ENCODE measurements at regions of chr18 and their contacts with region 1.

Region 1: GRCh38 chr18:70454704-70455322 is 166.0 kb downstream of the SOCS6 start:
- DNase-seq: peak; percentile 77
- H3K4me3 ChIP-seq: no peak overlapping the region
- H3K27ac ChIP-seq: no peak overlapping the region
- H3K4me1 ChIP-seq: no peaks in the 10 kb centered on the region
- H3K27me3 ChIP-seq: no peaks in the 10 kb centered on the region
- CTCF ChIP-seq: peak; percentile 88

Region 2: GRCh38 chr18:70195852-70196434 is 258.9 kb before region 1 on chr18:
- CTCF ChIA-PET with region 1: interaction called, 8 read pairs
- POLR2A ChIA-PET with region 1: no interaction called
- intact Hi-C with region 1: loop called (anchors 1 kb)
- DNase-seq: peak; percentile 57
- H3K4me3 ChIP-seq: no peak overlapping the region
- H3K27ac ChIP-seq: no peak overlapping the region
- H3K4me1 ChIP-seq: no peaks in the 10 kb centered on the region
- H3K27me3 ChIP-seq: no peaks in the 10 kb centered on the region
- CTCF ChIP-seq: peak; percentile 84

Region 3: DNA sequence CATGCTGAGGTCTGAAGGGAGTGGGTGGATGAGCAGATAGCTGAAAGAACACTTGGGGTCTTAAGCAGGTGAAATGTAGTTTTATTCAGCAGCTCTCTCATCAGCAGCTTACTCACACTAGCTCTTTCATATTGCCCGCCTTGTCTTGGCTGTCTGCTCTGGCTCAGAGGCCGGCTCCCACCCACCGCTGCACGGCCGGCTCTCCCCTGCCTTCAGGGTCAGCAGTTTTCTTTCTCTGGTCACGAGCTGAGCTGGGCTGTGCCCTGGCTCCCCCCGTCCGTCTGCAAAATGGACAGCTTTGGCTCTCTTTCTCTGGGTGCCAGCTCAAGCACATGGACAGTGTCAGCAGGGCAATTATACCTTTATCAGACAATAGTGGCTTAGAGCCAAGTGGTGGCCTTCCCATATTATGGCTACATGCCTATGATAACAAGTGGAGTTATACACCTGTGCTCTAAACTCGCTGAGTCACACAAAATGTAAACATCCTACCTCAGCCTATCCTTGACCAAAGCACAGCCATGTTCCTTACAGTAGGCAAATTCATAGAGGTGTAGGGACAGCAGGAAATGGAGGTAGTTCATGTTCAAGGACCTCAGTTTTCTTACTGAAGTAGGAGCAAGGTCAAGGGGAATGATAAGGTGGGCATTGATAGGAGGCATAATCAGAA is 58.8 kb after region 1 on chr18:
- CTCF ChIA-PET with region 1: no interaction called
- POLR2A ChIA-PET with region 1: no interaction called
- intact Hi-C with region 1: no loop called
- DNase-seq: no peak
- H3K4me3 ChIP-seq: no peak overlapping the region
- H3K27ac ChIP-seq: no peak overlapping the region
- H3K4me1 ChIP-seq: peaks cover 5% of the 10 kb centered on the region
- H3K27me3 ChIP-seq: no peaks in the 10 kb centered on the region
- CTCF ChIP-seq: no peak

Measured in A673 (cell line).